Activated naive CD4-positive, alpha-beta T cell treated with anti-CD3 and anti-CD28 coated beads for 36 hours (primary cell): ENCODE measurements at regions of chr19 and their contacts with region 1.

Region 1: DNA sequence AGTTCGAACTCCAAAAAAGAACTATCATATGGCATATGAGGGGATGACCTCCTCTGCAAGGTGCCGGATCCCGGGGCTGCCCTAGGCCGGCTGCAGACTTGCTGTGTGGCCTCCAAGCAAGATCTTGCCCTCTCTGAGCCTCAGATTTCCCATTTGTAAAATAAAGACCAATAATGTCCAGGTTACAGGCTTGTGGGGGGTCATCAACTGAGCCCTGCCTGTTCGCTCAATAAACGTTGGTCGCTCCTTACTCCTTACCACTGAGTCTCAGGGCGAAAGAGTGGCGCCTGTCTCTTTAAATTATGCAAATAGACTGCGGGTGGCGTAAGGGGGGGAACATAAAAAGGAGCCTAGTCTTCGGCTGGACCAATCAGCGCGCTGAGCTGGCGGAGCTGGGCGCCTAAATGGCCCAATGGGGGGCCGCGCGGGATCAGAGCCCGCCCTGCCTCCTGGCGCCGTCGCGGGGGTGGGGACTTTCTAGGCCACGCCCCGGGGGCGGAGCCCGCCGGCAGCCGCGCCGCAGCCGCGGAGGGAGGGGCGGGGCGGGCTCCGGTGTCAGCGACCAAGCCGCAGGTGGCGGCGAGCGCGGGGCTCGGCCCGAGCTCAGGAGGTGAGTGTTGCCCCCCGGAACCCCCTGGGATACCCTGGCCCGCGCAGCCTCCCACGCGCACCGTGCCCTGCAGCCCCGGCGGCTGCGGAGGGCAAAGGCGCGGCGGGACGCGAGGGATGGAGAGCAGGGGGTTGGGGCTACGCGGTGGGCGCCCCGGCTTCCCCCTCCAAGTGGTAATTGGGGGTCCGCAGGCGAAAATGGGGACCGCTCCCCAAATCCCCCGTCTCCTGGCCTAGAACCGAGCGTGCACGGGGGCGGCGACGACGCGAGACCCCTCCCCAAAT is 3.8 kb upstream of the FCHO1 start:
- DNase-seq: peak; percentile 97
- H3K4me3 Mint-ChIP-seq: peak overlapping the region; percentile 63
- H3K27ac Mint-ChIP-seq: peak overlapping the region; percentile 56
- H3K4me1 Mint-ChIP-seq: peaks cover 40% of the 10 kb centered on the region
- H3K27me3 Mint-ChIP-seq: no peaks in the 10 kb centered on the region

Region 2: GRCh38 chr19:17623224-17623935 is 124.1 kb before region 1 on chr19:
- CTCF ChIA-PET with region 1: no interaction called
- intact Hi-C with region 1: no loop called
- DNase-seq: no peak
- H3K4me3 Mint-ChIP-seq: no peak overlapping the region
- H3K27ac Mint-ChIP-seq: no peak overlapping the region
- H3K4me1 Mint-ChIP-seq: no peaks in the 10 kb centered on the region
- H3K27me3 Mint-ChIP-seq: peaks cover 6% of the 10 kb centered on the region

Region 3: DNA sequence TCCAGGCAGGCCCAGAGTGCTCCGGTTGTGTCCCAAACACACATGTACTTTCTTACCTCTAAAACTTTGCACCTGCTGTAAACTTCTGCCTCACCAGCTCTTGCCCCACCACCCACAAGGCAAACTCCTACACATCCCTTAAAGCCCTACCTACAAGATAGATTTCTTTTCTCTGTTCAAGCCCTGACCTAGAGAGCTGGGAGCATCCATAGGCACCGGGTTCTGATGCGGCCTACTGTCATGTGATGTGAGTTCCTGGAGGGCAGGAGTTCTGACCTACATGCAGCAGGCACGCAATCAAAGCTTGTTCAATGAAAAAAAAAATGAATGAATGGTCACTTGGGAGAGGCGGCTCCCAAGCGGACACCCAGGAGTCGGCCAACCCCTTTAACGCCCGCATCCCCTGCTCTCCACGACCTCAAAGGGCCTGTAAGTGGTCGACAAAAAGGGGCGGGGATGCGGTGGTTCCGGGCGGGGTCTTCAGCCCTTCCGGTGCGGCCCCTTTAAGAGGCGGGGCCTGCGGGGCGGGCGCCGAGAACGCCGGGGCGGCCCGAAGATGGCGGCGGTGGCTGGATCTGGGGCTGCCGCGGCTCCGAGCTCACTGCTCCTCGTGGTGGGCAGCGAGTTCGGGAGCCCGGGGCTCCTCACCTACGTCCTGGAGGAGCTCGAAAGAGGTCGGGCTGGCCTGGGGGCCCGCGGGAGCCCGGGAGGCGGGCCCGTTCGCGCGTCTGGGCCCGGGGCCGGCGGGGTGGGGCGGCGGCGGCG is 28.3 kb before region 1 on chr19 and contains the start of gene MAP1S:
- CTCF ChIA-PET with region 1: no interaction called
- intact Hi-C with region 1: loop called (anchors 1 kb)
- DNase-seq: peak; percentile 66
- H3K4me3 Mint-ChIP-seq: peak within 1 kb of the TSS; percentile 84
- H3K27ac Mint-ChIP-seq: peak within 1 kb of the TSS; percentile 76
- H3K4me1 Mint-ChIP-seq: peaks cover 34% of the 10 kb centered on the region
- H3K27me3 Mint-ChIP-seq: no peaks in the 10 kb centered on the region
- total RNA-seq, gene MAP1S: 46.8 to 51.8 TPM

Region 4: GRCh38 chr19:17902701-17903100 is 155.2 kb after region 1 on chr19:
- CTCF ChIA-PET with region 1: no interaction called
- intact Hi-C with region 1: no loop called
- DNase-seq: no peak
- H3K4me3 Mint-ChIP-seq: no peak overlapping the region
- H3K27ac Mint-ChIP-seq: no peak overlapping the region
- H3K4me1 Mint-ChIP-seq: no peaks in the 10 kb centered on the region
- H3K27me3 Mint-ChIP-seq: peaks cover 2% of the 10 kb centered on the region